Activated CD8-positive, alpha-beta T cell treated with anti-CD3 and anti-CD28 coated beads, Interleukin-2, amount 10 ng/mL, durations not matched to agents 7 days and 5 days (primary cell): ENCODE measurements at regions of chr16 and their contacts with region 1.

Region 1: GRCh38 chr16:69396187-69397061 is 10.6 kb upstream of the TERF2 start:
- DNase-seq: peak; percentile 84
- ATAC-seq: peak; percentile 73
- H3K4me3 Mint-ChIP-seq: no peak overlapping the region
- H3K27ac Mint-ChIP-seq: peak overlapping the region; percentile 47
- H3K4me1 Mint-ChIP-seq: peaks cover 18% of the 10 kb centered on the region
- H3K27me3 Mint-ChIP-seq: no peaks in the 10 kb centered on the region

Region 2: GRCh38 chr16:69217433-69217832 is 179.0 kb before region 1 on chr16:
- CTCF ChIA-PET with region 1: no interaction called
- POLR2A ChIA-PET with region 1: no interaction called
- DNase-seq: no peak
- ATAC-seq: no peak
- H3K4me3 Mint-ChIP-seq: no peak overlapping the region
- H3K27ac Mint-ChIP-seq: no peak overlapping the region
- H3K4me1 Mint-ChIP-seq: no peaks in the 10 kb centered on the region
- H3K27me3 Mint-ChIP-seq: no peaks in the 10 kb centered on the region

Region 3: GRCh38 chr16:69310653-69311532 is 85.5 kb before region 1 on chr16 and contains the start of gene VPS4A:
- CTCF ChIA-PET with region 1: no interaction called
- POLR2A ChIA-PET with region 1: no interaction called
- DNase-seq: peak; percentile 97
- ATAC-seq: peak; percentile 98
- H3K4me3 Mint-ChIP-seq: peak within 1 kb of the TSS; percentile 100
- H3K27ac Mint-ChIP-seq: peak within 1 kb of the TSS; percentile 98
- H3K4me1 Mint-ChIP-seq: peaks cover 23% of the 10 kb centered on the region
- H3K27me3 Mint-ChIP-seq: no peaks in the 10 kb centered on the region
- total RNA-seq, gene VPS4A: 31.4 to 33.7 TPM

Region 4: GRCh38 chr16:69417520-69418199 is 21.2 kb after region 1 on chr16:
- CTCF ChIA-PET with region 1: interaction called, 39 read pairs
- POLR2A ChIA-PET with region 1: no interaction called
- DNase-seq: no peak
- ATAC-seq: no peak
- H3K4me3 Mint-ChIP-seq: no peak overlapping the region
- H3K27ac Mint-ChIP-seq: no peak overlapping the region
- H3K4me1 Mint-ChIP-seq: peaks cover under 1% of the 10 kb centered on the region
- H3K27me3 Mint-ChIP-seq: no peaks in the 10 kb centered on the region

Region 5: GRCh38 chr16:69443927-69444631 is 47.7 kb after region 1 on chr16:
- CTCF ChIA-PET with region 1: interaction called, 24 read pairs
- POLR2A ChIA-PET with region 1: interaction called, 3 read pairs
- DNase-seq: peak; percentile 33
- ATAC-seq: peak; percentile 84
- H3K4me3 Mint-ChIP-seq: peak overlapping the region; percentile 76
- H3K27ac Mint-ChIP-seq: peak overlapping the region; percentile 93
- H3K4me1 Mint-ChIP-seq: peaks cover 33% of the 10 kb centered on the region
- H3K27me3 Mint-ChIP-seq: no peaks in the 10 kb centered on the region

Region 6: GRCh38 chr16:69476920-69477418 is 80.5 kb after region 1 on chr16:
- CTCF ChIA-PET with region 1: interaction called, 11 read pairs
- POLR2A ChIA-PET with region 1: no interaction called
- DNase-seq: no peak
- ATAC-seq: no peak
- H3K4me3 Mint-ChIP-seq: no peak overlapping the region
- H3K27ac Mint-ChIP-seq: no peak overlapping the region
- H3K4me1 Mint-ChIP-seq: no peaks in the 10 kb centered on the region
- H3K27me3 Mint-ChIP-seq: no peaks in the 10 kb centered on the region

Region 7: GRCh38 chr16:69669577-69669976 is 273.2 kb after region 1 on chr16:
- CTCF ChIA-PET with region 1: interaction called, 11 read pairs
- POLR2A ChIA-PET with region 1: no interaction called
- DNase-seq: no peak
- ATAC-seq: no peak
- H3K4me3 Mint-ChIP-seq: no peak overlapping the region
- H3K27ac Mint-ChIP-seq: no peak overlapping the region
- H3K4me1 Mint-ChIP-seq: peaks cover 4% of the 10 kb centered on the region
- H3K27me3 Mint-ChIP-seq: no peaks in the 10 kb centered on the region